Motor neuron (in vitro differentiated cells): ENCODE measurements at regions of chr1 and their contacts with region 1.

Region 1: DNA sequence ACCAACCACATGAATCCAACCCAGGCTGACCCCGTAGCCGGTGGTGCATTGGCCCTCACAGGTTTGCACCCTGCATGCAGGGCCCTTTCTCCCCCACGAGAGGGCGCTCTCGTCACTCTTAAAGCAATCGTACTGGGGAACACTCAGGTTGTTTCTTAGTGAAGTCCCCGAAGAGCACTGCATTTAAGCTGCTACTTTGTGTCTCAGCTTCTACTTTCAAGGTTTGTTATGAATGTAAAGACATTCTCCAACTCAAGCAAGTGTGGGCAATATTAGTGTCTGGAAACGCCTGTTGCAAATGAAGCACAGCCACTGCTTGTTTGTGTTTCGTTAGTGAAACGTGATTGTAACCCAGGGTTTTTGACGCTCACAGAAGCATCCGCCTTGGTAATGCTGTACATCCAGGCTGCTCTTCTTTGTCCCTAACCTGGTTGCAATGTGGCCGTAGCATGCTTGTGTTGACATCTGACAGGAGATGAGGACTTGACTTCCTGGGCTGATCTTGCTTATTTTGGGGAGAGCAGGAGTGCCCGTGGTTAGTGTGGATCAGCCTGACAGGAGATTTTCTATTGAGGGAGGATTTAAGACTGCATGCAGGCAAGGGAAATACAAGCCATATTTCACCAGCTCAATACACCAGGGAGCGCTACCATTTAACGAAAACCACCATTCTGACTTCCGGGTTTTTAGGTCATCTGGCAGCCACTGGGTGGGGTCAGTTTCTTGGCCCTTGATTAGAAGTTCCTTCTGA is 79.8 kb downstream of the ST6GALNAC3 start:
- ATAC-seq: peak; percentile 87 to 98 (median 96)
- H3K4me3 ChIP-seq: peak overlapping the region in 2 of 5 donors; percentile 1 to 8
- H3K27ac ChIP-seq: no peak overlapping the region
- H3K4me1 ChIP-seq: peaks cover 7 to 10% of the 10 kb centered on the region in 2 donors

Region 2: DNA sequence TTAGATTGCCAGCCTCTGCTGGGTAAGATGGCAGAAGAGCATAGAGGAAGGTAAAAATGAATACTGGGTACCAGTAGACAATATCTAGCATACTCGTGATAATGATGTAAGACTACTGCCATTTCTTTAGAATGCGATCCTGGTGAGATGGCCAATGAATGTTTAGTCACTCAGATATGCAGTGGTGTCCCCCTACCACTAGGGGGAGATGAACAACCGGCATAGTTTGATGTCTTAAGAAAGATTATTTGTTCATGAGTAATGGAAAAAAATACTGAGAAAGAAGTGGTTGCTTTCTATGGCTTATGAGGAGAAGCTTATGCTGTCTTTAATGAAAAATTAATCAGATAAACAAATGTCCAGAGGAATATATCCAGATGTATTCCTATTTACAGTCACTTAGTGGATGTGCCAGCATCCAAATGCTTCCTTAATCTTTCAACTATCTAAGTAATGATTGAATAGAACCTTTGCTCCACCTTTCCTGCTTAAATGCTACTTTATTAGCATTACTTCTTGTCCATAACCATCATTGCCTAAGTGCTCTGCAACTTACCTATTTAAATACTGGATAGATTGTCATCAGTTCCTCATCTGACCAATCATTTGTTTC is 176.7 kb after region 1 on chr1:
- in situ Hi-C with region 1: loop called in 1 of 9 experiments (anchors 25 kb)
- ATAC-seq: peak in 5 of 8 experiments; percentile 51 to 80 (median 73)
- H3K4me3 ChIP-seq: no peak overlapping the region
- H3K27ac ChIP-seq: no peak overlapping the region
- H3K4me1 ChIP-seq: peaks cover 4 to 10% of the 10 kb centered on the region in 2 donors

Region 3: GRCh38 chr1:76465030-76465429 is 310.6 kb after region 1 on chr1:
- in situ Hi-C with region 1: no loop called
- ATAC-seq: peak in 2 of 8 experiments; percentile 71 to 76
- H3K4me3 ChIP-seq: no peak overlapping the region
- H3K27ac ChIP-seq: no peak overlapping the region
- H3K4me1 ChIP-seq: peaks cover 0 to 5% of the 10 kb centered on the region in 2 donors

Region 4: DNA sequence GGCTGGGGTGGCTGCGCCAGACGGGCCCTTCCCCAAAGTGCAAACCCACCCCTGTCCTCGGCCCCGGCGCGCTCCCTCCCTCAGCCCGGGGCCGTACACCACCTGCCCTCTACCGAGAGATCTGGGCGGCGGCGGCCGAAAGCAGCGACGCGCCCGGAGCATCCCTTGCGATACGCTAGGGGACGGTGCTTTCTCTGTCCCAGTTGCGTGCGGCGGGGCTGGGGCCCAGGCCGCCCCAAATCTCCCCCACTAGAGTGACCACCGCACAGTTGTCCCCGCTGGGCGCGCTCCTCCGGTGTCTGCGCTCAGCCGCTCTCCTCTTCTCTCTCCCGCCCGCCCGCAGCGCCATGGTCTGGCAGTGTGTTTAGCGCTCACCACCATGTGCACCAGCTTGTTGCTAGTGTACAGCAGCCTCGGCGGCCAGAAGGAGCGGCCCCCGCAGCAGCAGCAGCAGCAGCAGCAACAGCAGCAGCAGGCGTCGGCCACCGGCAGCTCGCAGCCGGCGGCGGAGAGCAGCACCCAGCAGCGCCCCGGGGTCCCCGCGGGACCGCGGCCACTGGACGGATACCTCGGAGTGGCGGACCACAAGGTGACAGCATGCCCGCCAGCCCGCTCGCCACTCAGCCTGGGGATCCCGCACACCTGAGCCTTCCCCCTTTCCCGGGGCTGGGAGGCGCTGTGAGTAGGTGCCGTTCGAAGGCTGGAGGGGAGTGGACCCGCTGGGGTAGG is 713.9 kb after region 1 on chr1:
- in situ Hi-C with region 1: loop called in 2 of 9 experiments (anchors 25 kb)
- ATAC-seq: peak; percentile 78 to 89 (median 83)
- H3K4me3 ChIP-seq: peak overlapping the region; percentile 57 to 91 (median 82)
- H3K27ac ChIP-seq: peak overlapping the region; percentile 29 to 61
- H3K4me1 ChIP-seq: peaks cover 5 to 46% of the 10 kb centered on the region in 2 donors

Region 5: DNA sequence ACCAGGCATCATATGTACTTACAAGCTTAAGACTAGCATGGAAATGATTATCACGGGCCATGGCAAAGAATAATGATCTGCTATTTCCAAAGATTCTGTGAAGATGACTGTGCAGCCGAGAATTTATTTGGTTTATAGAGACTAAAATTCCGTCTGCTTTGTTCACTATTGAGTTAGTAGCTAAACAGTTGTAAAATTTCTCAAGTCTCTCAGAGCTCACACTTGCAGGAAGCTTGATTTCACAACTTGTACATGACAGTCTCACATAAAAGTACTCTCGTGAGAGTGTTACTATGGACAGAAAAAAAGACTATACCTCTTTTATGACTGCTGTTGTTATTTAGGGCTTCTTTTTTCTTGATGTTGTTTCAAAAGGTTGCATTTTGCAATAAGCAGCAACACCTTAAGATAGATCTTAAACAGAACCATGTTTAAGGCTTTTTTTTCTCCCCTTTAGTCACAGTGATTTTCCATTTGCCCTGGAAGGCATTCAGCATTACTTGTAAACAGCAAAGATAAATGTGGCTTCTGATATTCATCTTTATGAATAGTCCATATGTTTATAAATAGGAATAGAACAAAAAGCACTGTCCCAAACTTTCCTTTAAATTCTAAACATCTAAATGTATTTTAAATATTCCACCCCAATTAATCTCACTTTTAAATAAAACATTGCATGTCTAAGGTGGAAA is 737.7 kb after region 1 on chr1:
- in situ Hi-C with region 1: loop called in 1 of 9 experiments (anchors 25 kb)
- ATAC-seq: peak in 3 of 8 experiments; percentile 58 to 77 (median 63)
- H3K4me3 ChIP-seq: no peak overlapping the region
- H3K27ac ChIP-seq: no peak overlapping the region
- H3K4me1 ChIP-seq: no peaks in the 10 kb centered on the region

Region 6: DNA sequence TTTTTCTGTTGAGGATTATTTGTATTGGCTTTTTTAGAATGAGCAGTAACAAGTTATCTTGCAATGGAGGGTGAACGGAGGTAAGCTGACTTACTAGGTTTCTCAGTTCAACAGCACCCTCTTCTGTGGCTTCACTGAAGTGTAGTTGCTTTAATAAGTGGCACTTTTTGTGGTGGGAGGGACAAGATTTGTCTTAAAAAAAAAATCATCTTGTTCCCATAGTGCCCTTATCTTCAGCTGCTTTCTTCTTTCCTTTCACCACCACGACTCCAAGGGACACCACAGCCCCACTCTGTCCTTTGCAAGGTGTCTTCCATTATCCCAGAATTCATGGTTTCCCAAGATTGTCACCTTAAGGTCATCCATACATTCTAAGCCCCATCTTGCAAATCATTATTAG is 971.9 kb after region 1 on chr1:
- in situ Hi-C with region 1: loop called in 8 of 9 experiments (anchors 10 to 25 kb)
- ATAC-seq: peak; percentile 61 to 85 (median 72)
- H3K4me3 ChIP-seq: no peak overlapping the region
- H3K27ac ChIP-seq: no peak overlapping the region
- H3K4me1 ChIP-seq: peaks cover 0 to 9% of the 10 kb centered on the region in 2 donors

Region 7: GRCh38 chr1:77134359-77134758 is 980.0 kb after region 1 on chr1:
- in situ Hi-C with region 1: loop called in 8 of 9 experiments (anchors 10 to 25 kb)
- ATAC-seq: no peak
- H3K4me3 ChIP-seq: no peak overlapping the region
- H3K27ac ChIP-seq: no peak overlapping the region
- H3K4me1 ChIP-seq: no peaks in the 10 kb centered on the region

Region 8: GRCh38 chr1:77143529-77144121 is 989.2 kb after region 1 on chr1:
- in situ Hi-C with region 1: loop called in 7 of 9 experiments (anchors 10 to 25 kb)
- ATAC-seq: no peak
- H3K4me3 ChIP-seq: no peak overlapping the region
- H3K27ac ChIP-seq: no peak overlapping the region
- H3K4me1 ChIP-seq: no peaks in the 10 kb centered on the region